Aorta (tissue), 5 donors: ENCODE measurements at regions of chr7 and their contacts with region 1.

Region 1: DNA sequence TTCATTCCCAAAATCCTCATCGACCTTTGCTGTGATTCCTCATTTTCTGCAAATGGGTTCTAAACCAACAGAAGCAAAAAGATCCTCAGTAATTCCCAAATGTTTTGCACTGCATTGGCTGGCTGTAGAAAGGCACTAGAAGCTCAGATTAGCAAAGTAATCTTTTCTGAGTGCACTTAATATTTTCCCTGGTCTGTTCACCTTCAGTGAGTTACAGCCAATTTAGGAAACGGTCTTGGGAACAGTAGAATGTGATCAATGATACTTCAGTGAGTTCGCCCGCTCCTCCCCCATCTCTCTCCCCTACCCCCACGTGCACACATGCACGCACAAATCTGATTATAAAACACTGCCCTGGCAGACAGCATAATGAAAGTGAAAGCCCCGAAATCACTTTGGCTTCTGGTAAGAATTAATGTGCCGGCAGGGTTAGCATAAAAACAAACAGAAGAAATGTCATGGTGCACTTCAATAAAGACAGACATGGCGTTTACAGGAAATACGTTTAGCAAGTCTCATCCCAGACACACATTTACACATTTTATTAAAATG is 201.3 kb upstream of the CDCA7L start:
- DNase-seq: no peak
- ATAC-seq: no peak
- H3K4me3 ChIP-seq: no peak overlapping the region
- H3K27ac ChIP-seq: no peak overlapping the region
- H3K4me1 ChIP-seq: no peaks in the 10 kb centered on the region
- H3K27me3 ChIP-seq: no peaks in the 10 kb centered on the region

Region 2: GRCh38 chr7:22202141-22202540 is 55.1 kb after region 1 on chr7:
- intact Hi-C with region 1: loop called in 1 of 2 experiments (anchors 10 kb)
- DNase-seq: no peak
- ATAC-seq: no peak
- H3K4me3 ChIP-seq: no peak overlapping the region
- H3K27ac ChIP-seq: no peak overlapping the region
- H3K4me1 ChIP-seq: peaks cover 0 to 7% of the 10 kb centered on the region in 2 donors
- H3K27me3 ChIP-seq: no peaks in the 10 kb centered on the region